GM12878 (cell line): ENCODE measurements at regions of chr13 and their contacts with region 1.

Region 1: GRCh38 chr13:35630551-35631275 is 154.2 kb upstream of the MAB21L1 start:
- DNase-seq: no peak
- ATAC-seq: peak; percentile 96
- H3K4me3 ChIP-seq: no peak overlapping the region
- H3K27ac ChIP-seq: no peak overlapping the region
- H3K4me1 ChIP-seq: no peaks in the 10 kb centered on the region
- H3K27me3 ChIP-seq: no peaks in the 10 kb centered on the region
- CTCF ChIP-seq: peak; percentile 54 to 72 (median 65)
- EP300 ChIP-seq: no peak
- POLR2A ChIP-seq: no peak
- RAD21 ChIP-seq: 0 out of 2 replicates have a peak, but pooled peaks have one; percentile 20

Region 2: GRCh38 chr13:35720690-35721554 is 90.2 kb after region 1 on chr13:
- CTCF ChIA-PET with region 1: interaction called, 18 read pairs
- POLR2A ChIA-PET with region 1: no interaction called
- RAD21 ChIA-PET with region 1: interaction called, 4 read pairs
- SMC1A ChIA-PET with region 1: interaction called, 4 read pairs
- in situ Hi-C with region 1: no loop called
- intact Hi-C with region 1: loop called (anchors 2 kb)
- DNase-seq: no peak
- ATAC-seq: peak; percentile 76
- H3K4me3 ChIP-seq: no peak overlapping the region
- H3K27ac ChIP-seq: no peak overlapping the region
- H3K4me1 ChIP-seq: no peaks in the 10 kb centered on the region
- H3K27me3 ChIP-seq: no peaks in the 10 kb centered on the region; a peak in 1 of 4 replicates
- CTCF ChIP-seq: peak; percentile 66 to 90 (median 86)
- EP300 ChIP-seq: no peak
- POLR2A ChIP-seq: no peak
- RAD21 ChIP-seq: peak; percentile 73